ENCODE measurements at regions of chr12 and their contacts with region 1.

Region 1: GRCh38 chr12:132761032-132761920 is at the start of gene ANKLE2:
- DNase-seq: peak; percentile 53
- ATAC-seq: peak; percentile 56
- H3K4me3 Mint-ChIP-seq: peak within 1 kb of the TSS; percentile 98
- H3K27ac Mint-ChIP-seq: peak within 1 kb of the TSS; percentile 96
- H3K4me1 Mint-ChIP-seq: peaks cover 60% of the 10 kb centered on the region
- H3K27me3 Mint-ChIP-seq: no peaks in the 10 kb centered on the region
- CTCF ChIP-seq: no peak
- total RNA-seq, gene ANKLE2: 117 and 136 TPM in 2 replicates

Region 2: GRCh38 chr12:132393991-132394949 is 367.0 kb before region 1 on chr12:
- CTCF ChIA-PET with region 1: no interaction called
- POLR2A ChIA-PET with region 1: no interaction called
- intact Hi-C with region 1: no loop called
- DNase-seq: no peak
- ATAC-seq: no peak
- H3K4me3 Mint-ChIP-seq: no peak overlapping the region
- H3K27ac Mint-ChIP-seq: no peak overlapping the region
- H3K4me1 Mint-ChIP-seq: peaks cover 2% of the 10 kb centered on the region
- H3K27me3 Mint-ChIP-seq: peaks cover 15% of the 10 kb centered on the region
- CTCF ChIP-seq: no peak

Region 3: GRCh38 chr12:132687208-132688164 is 73.8 kb before region 1 on chr12 and contains the starts of genes POLE and PXMP2:
- CTCF ChIA-PET with region 1: no interaction called
- POLR2A ChIA-PET with region 1: no interaction called
- intact Hi-C with region 1: loop called (anchors 2 kb)
- DNase-seq: peak; percentile 91
- ATAC-seq: peak; percentile 95
- H3K4me3 Mint-ChIP-seq: peak within 1 kb of the TSS; percentile 83
- H3K27ac Mint-ChIP-seq: no peak within 1 kb of the TSS
- H3K4me1 Mint-ChIP-seq: peaks cover 16% of the 10 kb centered on the region
- H3K27me3 Mint-ChIP-seq: no peaks in the 10 kb centered on the region
- CTCF ChIP-seq: no peak
- total RNA-seq, gene POLE: 51.1 and 64.3 TPM in 2 replicates
- total RNA-seq, gene PXMP2: 5.3 and 7.7 TPM in 2 replicates

Region 4: GRCh38 chr12:132771126-132771838 is 10.0 kb after region 1 on chr12:
- CTCF ChIA-PET with region 1: interaction called, 6 read pairs
- POLR2A ChIA-PET with region 1: interaction called, 43 read pairs
- intact Hi-C with region 1: loop called (anchors 1 kb)
- DNase-seq: peak; percentile 38
- ATAC-seq: peak; percentile 49
- H3K4me3 Mint-ChIP-seq: peak overlapping the region; percentile 62
- H3K27ac Mint-ChIP-seq: peak overlapping the region; percentile 94
- H3K4me1 Mint-ChIP-seq: peaks cover 68% of the 10 kb centered on the region
- H3K27me3 Mint-ChIP-seq: no peaks in the 10 kb centered on the region
- CTCF ChIP-seq: no peak

Region 5: DNA sequence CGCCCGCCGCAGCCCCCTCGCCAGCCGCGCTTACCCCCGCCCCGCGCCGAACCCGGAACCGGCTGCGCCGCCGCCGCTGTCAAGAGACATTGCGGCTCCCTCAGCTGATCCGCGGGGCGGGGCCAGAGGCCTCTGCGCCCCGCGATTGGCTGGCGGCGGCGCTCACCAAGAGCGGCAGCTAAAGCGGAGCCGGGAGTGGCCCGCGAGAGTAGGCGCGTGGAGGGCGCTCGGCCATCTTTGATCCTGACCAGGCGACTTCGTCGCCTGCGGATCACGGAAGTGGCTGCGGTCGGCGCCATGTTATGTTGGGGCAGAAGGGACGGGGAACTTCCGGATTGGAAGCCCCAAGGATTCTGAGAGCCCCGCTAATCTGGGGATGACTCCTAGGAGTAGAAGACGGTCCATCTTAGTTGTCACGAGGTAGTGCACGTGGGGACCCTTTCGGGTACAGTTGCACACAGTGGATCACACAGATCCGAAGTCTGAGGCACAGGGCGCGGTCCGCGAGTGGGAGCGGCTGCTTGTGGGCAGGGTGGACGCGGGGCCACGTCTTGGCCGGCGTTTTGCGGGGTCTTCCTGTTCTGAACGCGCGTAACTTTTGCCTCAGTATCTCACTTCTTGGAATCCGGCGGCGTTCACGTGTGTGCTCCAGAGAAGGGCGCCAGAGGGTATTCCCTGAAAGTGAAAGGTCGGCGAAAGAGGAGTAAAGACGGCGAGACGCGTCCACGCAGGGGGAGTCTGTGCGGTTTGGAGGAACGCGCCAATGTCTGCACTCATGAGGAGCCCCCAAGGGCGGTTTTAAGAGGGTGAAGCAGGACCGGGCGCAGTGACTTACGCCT is 126.5 kb after region 1 on chr12 and contains the start of gene CHFR:
- CTCF ChIA-PET with region 1: no interaction called
- POLR2A ChIA-PET with region 1: interaction called, 10 read pairs
- intact Hi-C with region 1: no loop called
- DNase-seq: peak; percentile 90
- ATAC-seq: peak; percentile 98
- H3K4me3 Mint-ChIP-seq: peak within 1 kb of the TSS; percentile 98
- H3K27ac Mint-ChIP-seq: peak within 1 kb of the TSS; percentile 100
- H3K4me1 Mint-ChIP-seq: peaks cover 24% of the 10 kb centered on the region
- H3K27me3 Mint-ChIP-seq: peaks cover 7% of the 10 kb centered on the region
- CTCF ChIP-seq: no peak
- total RNA-seq, gene CHFR: 89.4 and 108 TPM in 2 replicates

Region 6: DNA sequence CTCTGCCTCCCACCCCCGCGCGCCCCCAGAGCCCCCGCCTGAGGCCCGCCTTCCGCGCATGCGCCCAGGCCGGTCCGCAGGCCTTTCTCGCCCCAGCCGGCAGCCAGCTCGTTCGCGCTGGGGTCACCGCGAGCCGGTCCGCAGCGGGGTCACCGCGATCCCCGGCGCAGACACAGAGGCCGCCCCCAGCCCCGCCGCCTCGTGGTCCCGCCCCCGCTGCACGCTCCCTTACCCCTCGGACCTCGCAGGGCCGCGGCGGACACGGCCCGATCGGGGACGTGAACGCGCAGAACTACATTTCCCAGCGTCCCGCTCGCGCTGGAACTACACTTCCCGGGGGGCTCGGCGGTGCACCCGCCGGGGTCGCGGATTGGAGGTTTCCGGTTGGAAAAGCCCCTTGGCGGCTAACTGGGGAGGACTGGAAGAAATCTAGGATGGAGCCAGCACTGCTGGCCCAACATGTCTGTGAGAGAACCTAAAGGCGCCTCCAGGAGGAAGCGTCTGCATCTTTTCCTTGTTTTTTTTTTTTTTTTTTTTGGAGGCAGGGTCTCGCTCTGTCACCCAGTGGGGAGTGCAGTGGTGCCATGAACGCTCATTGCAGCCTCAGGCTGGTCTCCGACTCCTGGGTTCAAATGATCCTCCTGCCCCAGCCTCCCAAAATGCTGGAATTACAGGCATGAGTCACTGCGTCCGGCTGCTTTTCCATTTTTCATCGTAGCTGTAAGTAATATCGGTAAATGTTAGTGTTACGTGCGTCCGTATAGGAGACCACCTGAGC is 194.9 kb after region 1 on chr12 and contains the start of gene ZNF605:
- CTCF ChIA-PET with region 1: no interaction called
- POLR2A ChIA-PET with region 1: no interaction called
- intact Hi-C with region 1: loop called (anchors 1 kb)
- DNase-seq: peak; percentile 87
- ATAC-seq: peak; percentile 89
- H3K4me3 Mint-ChIP-seq: peak within 1 kb of the TSS; percentile 96
- H3K27ac Mint-ChIP-seq: peak within 1 kb of the TSS; percentile 93
- H3K4me1 Mint-ChIP-seq: peaks cover 33% of the 10 kb centered on the region
- H3K27me3 Mint-ChIP-seq: no peaks in the 10 kb centered on the region
- CTCF ChIP-seq: no peak
- total RNA-seq, gene ZNF605: 12.2 and 15.4 TPM in 2 replicates